ENCODE measurements at regions of chr4 and their contacts with region 1.

Region 1: GRCh38 chr4:68630373-68630772 is 40.1 kb downstream of the UGT2B15 start:
- DNase-seq: no peak
- H3K4me3 ChIP-seq: no peak overlapping the region
- H3K27ac ChIP-seq: no peak overlapping the region
- H3K4me1 ChIP-seq: no peaks in the 10 kb centered on the region
- H3K27me3 ChIP-seq: no peaks in the 10 kb centered on the region
- CTCF ChIP-seq: no peak

Region 2: DNA sequence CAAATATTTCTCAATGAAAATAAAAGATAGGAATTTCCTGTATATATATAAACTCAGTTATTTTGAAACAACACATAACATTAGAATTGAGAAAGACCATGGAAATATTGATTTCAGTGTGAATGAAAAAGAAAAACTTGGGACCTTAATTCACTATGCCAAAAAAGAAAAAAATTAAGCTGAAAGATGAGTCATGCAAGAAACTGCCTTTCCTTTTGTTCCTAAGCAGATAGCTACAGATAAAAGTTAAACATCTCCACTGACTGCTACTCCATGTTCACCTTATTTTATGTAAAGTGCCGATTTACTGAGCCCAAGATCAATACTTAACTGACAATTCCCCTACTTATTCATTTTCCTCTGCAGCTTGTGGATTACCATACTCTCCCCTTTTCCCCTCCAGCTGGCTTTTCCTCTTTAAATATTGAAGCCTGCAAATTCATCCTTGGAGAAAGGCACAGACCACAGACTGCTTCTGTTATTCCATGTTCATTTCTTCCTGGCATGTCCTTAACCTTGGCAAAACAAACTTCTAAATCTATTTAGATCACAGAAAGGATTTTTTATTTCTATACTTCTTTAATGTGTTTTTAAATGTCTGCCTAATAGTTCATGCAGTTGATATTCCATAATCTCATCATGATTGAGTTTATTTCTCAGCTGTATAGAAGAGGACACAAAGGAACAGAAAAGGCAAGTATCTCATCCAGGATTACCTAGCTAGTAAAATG is 240.0 kb before region 1 on chr4:
- intact Hi-C with region 1: no loop called
- DNase-seq: no peak
- H3K4me3 ChIP-seq: no peak overlapping the region
- H3K27ac ChIP-seq: no peak overlapping the region
- H3K4me1 ChIP-seq: no peaks in the 10 kb centered on the region
- H3K27me3 ChIP-seq: peaks cover 50% of the 10 kb centered on the region
- CTCF ChIP-seq: no peak

Region 3: DNA sequence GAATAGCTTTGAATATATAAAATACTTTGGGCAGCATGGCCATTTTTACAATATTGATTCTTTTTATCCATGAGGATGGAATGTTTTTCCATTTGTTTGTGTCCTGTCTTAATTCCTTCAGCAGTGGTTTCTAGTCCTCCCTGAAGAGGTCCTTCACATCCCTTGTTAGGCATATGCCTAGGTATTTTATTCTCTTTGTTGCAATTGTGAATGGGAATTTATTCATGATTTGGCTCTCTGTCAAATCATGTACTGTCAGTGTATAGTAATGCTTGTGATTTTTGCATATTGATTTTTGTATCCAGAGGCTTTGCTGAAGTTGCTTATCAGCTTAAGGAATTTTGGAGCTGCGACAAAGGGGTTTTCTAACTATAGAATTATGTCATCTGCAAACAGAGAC is 21.6 kb after region 1 on chr4:
- intact Hi-C with region 1: loop called (anchors 2 kb)
- DNase-seq: no peak
- H3K4me3 ChIP-seq: no peak overlapping the region
- H3K27ac ChIP-seq: no peak overlapping the region
- H3K4me1 ChIP-seq: peaks cover 4% of the 10 kb centered on the region
- H3K27me3 ChIP-seq: no peaks in the 10 kb centered on the region
- CTCF ChIP-seq: no peak

Measured in left ventricle myocardium inferior (tissue), 1 donor.